Right ventricle myocardium inferior (tissue), 1 donor: ENCODE measurements at regions of chr10 and their contacts with region 1.

Region 1: GRCh38 chr10:110225756-110226542 is 18.5 kb downstream of the MXI1 start:
- DNase-seq: peak; percentile 96
- ATAC-seq: peak; percentile 73

Region 2: DNA sequence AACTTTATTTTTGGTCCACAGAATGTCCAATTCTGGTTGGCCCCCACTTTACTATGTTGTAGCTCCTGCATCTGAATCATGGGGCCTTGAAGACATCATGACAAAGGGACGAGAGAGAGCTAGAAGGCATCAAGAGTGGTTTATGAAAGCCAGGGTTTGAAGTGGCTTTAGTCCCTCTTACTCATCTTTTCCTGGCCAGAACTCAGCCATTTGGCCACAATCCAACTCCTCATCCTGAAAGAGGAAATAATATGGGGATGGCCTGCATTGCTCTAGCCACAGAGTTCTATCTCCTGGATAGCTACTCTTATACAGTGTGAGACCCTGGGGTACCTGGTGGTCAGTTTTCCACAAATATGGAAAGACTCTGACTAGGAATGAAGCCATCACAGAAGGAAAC is 721.6 kb before region 1 on chr10:
- intact Hi-C with region 1: no loop called
- DNase-seq: no peak
- ATAC-seq: no peak

Region 3: DNA sequence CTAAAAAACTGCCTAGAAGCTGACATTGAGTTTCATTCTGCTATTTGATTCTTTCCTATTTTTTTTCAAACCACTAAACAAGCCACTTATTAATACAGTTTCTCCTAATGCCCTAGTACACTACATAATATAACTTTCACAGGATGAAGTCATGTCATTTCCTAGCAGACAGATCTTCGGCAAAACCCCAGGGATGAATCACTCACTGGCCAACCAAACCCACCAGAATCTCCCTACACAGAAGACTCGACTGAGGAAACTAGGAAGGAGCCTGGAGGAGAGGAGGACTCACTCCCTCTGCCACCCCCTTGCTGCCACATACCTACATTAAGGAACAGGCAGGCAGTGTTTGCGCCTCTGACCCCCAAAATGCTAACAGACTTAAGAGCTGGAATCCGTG is 336.1 kb before region 1 on chr10:
- intact Hi-C with region 1: loop called (anchors 5 kb)
- DNase-seq: no peak
- ATAC-seq: no peak

Region 4: GRCh38 chr10:110210674-110211464 is 15.1 kb before region 1 on chr10:
- intact Hi-C with region 1: loop called (anchors 1 kb)
- DNase-seq: peak; percentile 97
- ATAC-seq: peak; percentile 88

Region 5: GRCh38 chr10:110269374-110270318 is 43.7 kb after region 1 on chr10:
- intact Hi-C with region 1: loop called (anchors 2 kb)
- DNase-seq: no peak
- ATAC-seq: peak; percentile 80

Region 6: DNA sequence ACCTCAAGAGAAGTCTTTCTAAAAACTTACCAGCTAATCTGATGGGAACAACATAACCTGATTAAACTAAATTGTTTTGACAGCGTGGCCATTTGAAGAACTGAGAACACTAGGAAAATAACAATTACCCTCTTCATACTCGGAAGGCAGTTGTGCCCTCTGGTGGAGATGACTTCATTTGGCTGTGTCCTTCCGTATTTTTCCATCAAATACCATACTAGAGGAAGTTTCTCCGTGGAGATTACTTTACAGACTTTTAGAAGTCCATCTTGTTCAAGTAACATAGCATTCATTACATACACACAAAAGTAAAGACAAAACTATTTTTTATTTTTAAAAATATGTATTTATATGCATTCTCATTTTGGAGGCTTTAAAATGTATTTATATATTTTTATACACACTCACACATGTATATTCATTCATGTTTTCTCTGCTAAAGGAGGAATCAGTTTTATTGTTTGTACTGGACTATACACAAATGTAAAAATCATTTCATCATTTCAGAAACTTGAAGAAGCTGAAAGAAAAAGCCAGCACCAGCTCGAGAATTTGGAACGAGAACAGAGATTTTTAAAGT is 53.5 kb after region 1 on chr10:
- intact Hi-C with region 1: loop called (anchors 2 kb)
- DNase-seq: no peak
- ATAC-seq: peak; percentile 76